Activated T-helper 1 cell treated with anti-CD3 and anti-CD28 coated beads, Interleukin-12 subunit alpha, Interleukin-12 subunit beta, Interleukin-2, Interleukin-4 antibody, amounts not matched to agents 30 ng/mL and 10 ng/mL and 1 ng/mL, durations not matched to agents 14 hours and 24 hours and 36 hours (primary cell): ENCODE measurements at regions of chr17 and their contacts with region 1.

Region 1: DNA sequence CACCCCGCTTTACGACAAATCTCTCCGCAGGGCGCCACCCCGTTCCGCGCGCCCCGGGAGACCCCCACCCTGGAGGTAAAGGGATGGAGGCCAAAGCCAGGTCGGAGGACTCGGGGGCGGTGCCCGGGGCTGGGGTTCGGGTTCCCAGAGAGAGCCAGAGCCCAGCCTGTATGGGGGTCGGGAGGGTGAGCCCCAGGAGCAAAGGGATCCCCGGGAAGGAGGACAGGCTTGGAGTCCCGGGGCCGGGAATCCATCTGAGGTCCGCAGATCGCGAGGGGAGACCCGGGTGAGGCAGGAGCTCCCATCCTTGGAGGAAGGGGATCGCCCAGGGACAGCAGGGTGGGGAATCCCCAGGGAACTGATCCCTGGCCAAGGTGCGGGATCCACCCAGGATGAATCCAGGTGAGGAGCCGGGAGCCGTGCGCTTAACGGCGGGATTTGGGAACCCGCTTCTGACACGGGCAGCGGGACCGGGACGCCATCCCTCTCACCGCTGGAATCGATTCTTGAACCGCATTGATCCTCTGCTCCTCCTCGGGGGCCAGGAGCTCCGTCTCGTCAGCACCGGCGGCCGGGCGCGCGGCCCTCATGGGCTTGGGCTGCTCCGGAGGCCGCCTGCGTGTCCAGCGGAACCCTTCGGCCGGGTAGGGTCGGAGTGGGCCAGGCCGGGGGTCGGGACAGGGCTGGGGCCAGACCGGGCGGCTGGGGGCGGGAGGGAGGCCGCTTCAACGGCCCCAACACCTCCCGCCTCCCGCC is at the start of gene MMD:
- DNase-seq: no peak
- H3K4me3 Mint-ChIP-seq: peak within 1 kb of the TSS; percentile 93
- H3K27ac Mint-ChIP-seq: peak within 1 kb of the TSS; percentile 93
- H3K4me1 Mint-ChIP-seq: peaks cover 53% of the 10 kb centered on the region
- H3K27me3 Mint-ChIP-seq: peaks cover 19% of the 10 kb centered on the region
- total RNA-seq, gene MMD: 24.1 and 24.6 TPM in 2 replicates

Region 2: DNA sequence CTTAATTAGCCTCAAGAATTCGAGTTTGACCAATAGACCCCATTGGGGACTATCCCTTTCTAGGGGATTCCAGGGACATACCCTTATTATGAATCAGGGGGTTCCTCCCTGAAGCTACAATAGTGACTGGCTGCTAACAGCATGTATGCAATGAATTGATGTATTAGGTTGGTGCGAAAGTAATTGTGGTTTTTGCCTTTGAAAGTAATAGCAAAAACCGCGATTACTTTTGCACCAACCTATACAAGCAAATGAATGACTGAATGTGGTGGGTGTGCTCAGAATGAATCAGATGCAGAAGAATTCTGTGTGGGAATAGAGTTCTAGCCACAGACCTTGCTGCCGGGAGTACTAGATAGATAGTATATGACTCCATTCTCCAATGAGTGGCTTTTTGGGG is 79.9 kb before region 1 on chr17:
- intact Hi-C with region 1: loop called (anchors 2 kb)
- DNase-seq: no peak
- H3K4me3 Mint-ChIP-seq: no peak overlapping the region
- H3K27ac Mint-ChIP-seq: no peak overlapping the region
- H3K4me1 Mint-ChIP-seq: peaks cover 46% of the 10 kb centered on the region
- H3K27me3 Mint-ChIP-seq: peaks cover 28% of the 10 kb centered on the region

Region 3: GRCh38 chr17:55458977-55459376 is 37.6 kb after region 1 on chr17:
- intact Hi-C with region 1: loop called (anchors 2 kb)
- DNase-seq: peak; percentile 1
- H3K4me3 Mint-ChIP-seq: no peak overlapping the region
- H3K27ac Mint-ChIP-seq: no peak overlapping the region
- H3K4me1 Mint-ChIP-seq: peaks cover 18% of the 10 kb centered on the region
- H3K27me3 Mint-ChIP-seq: peaks cover 5% of the 10 kb centered on the region

Region 4: DNA sequence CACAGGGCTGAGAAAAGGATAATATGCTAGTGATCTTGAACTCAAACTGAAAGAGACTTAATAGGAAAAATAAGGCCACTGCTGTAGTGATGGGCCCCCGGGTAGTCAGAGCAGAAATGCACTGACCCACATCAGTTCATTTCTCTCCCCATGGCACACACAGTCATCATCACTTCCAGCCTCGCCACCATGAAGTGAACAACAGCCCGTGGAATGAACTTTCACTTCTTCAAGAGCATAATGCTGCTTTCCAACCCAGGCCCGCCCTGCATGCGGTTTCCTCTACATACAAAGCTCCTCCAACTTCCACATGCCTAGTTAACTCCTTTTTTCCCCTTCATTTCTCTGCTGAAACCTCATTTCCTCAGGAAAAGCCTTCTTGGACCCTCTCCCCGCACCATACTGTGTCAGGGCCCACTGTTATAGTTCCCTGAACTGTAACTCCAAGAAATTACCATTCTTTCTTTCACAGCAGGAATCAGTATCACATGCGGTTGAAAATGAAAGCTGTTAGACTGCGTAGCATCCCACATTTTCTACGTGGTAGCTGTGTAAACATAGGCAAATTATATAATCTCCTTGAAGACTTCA is 155.7 kb after region 1 on chr17:
- intact Hi-C with region 1: loop called (anchors 5 kb)
- DNase-seq: peak; percentile 14
- H3K4me3 Mint-ChIP-seq: no peak overlapping the region
- H3K27ac Mint-ChIP-seq: no peak overlapping the region
- H3K4me1 Mint-ChIP-seq: peaks cover 5% of the 10 kb centered on the region
- H3K27me3 Mint-ChIP-seq: peaks cover 17% of the 10 kb centered on the region